ENCODE measurements at regions of chr11 and their contacts with region 1.

Region 1: DNA sequence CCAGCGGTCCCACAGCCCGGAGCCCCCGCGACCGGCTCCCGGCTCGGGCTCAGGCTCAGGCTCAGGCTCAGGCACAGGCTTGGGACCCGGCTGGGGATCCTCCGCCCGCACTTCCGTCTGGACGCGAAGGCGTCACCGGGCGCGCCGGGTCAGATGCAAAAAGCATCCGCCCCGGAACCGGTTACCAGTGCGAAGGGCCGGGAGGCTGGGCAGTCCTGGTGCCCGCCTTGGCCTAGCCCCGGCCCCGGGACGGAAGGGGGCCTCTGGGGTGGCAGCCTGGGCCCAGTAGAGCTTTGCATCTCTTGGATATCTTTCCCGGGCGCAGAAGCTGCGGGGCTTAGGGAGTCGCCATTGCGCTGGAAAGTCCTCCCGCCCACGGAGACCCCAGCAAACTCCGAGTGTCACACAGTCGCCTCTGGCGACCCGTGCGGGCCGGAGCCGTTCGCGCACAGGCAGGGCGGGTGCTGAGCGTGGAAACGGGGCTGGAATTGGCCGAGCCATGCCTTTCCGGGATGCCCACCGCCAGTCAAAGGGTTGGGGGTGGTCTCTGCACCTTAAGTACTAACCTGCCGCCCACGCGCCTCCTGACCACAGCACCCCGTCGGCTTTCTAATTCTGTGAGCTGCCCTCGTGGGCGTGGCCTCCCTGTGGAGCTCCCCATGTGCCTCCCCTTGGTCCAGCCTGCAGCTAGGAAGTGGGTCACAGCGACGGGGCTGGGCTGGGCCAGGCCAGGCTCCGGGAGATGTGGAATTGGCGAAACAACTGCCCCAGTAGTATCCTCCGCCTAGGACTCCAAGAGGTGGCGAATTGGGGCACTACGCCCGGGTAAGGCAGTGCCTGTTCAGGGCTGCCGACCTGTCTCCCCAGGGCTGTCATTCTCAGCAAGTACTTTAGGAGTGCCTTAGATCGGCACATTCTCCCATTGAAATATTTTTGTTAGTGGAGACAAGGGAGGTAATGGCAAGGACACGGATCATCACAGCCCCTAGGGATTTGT is at the start of gene TMEM9B:
- DNase-seq: peak; percentile 93 to 97
- H3K4me3 ChIP-seq: peak within 1 kb of the TSS; percentile 68 to 89 (median 86)
- H3K27ac ChIP-seq: peak within 1 kb of the TSS; percentile 95 to 99 (median 96)
- H3K4me1 ChIP-seq: peaks cover 13 to 45% (median 40%) of the 10 kb centered on the region in 4 donors
- H3K27me3 ChIP-seq: no peaks in the 10 kb centered on the region
- CTCF ChIP-seq: no peak
- EP300 ChIP-seq: no peak
- POLR2A ChIP-seq: peak in 2 of 4 donors; percentile 87 to 92
- total RNA-seq, gene TMEM9B: 0.58 to 74.4 (median 30.7) TPM

Region 2: GRCh38 chr11:8688414-8689362 is 275.9 kb before region 1 on chr11:
- intact Hi-C with region 1: loop called (anchors 10 kb)
- DNase-seq: peak; percentile 95 to 98
- H3K4me3 ChIP-seq: peak overlapping the region; percentile 52 to 56 (median 54)
- H3K27ac ChIP-seq: peak overlapping the region; percentile 85 to 95 (median 90)
- H3K4me1 ChIP-seq: peaks cover 26 to 57% (median 44%) of the 10 kb centered on the region in 4 donors
- H3K27me3 ChIP-seq: no peaks in the 10 kb centered on the region
- CTCF ChIP-seq: peak in 1 of 7 experiments; percentile 7
- EP300 ChIP-seq: no peak
- POLR2A ChIP-seq: peak in 2 of 4 donors; percentile 37 to 38